ENCODE measurements at regions of chr12 and their contacts with region 1.

Region 1: GRCh38 chr12:13196130-13196921 is at the start of gene EMP1:
- DNase-seq: peak; percentile 87 to 96 (median 92)
- ATAC-seq: peak; percentile 83 to 92 (median 87)
- H3K4me3 ChIP-seq: peak within 1 kb of the TSS; percentile 54 to 85 (median 66)
- H3K27ac ChIP-seq: peak within 1 kb of the TSS; percentile 81 to 99 (median 90)
- H3K4me1 ChIP-seq: peaks cover 0 to 67% (median 32%) of the 10 kb centered on the region in 12 donors
- H3K27me3 ChIP-seq: no peaks in the 10 kb centered on the region
- CTCF ChIP-seq: no peak
- POLR2A ChIP-seq: peak in 1 of 2 donors; percentile 70
- total RNA-seq, gene EMP1: 67.9 to 281 (median 175) TPM

Region 2: GRCh38 chr12:13114251-13115052 is 81.9 kb before region 1 on chr12:
- intact Hi-C with region 1: loop called in 2 of 10 experiments (anchors 5 kb)
- DNase-seq: no peak
- ATAC-seq: peak in 3 of 4 donors; percentile 16 to 44 (median 32)
- H3K4me3 ChIP-seq: peak overlapping the region in 2 of 12 donors; percentile 14 to 17
- H3K27ac ChIP-seq: peak overlapping the region in 2 of 12 donors; percentile 9 to 13
- H3K4me1 ChIP-seq: peaks cover 0 to 37% (median 18%) of the 10 kb centered on the region in 12 donors
- H3K27me3 ChIP-seq: no peaks in the 10 kb centered on the region
- CTCF ChIP-seq: no peak
- POLR2A ChIP-seq: no peak

Region 3: GRCh38 chr12:13148064-13148847 is 48.1 kb before region 1 on chr12:
- intact Hi-C with region 1: loop called in 4 of 10 experiments (anchors 5 kb)
- DNase-seq: no peak
- ATAC-seq: peak in 2 of 4 donors; percentile 31 to 45
- H3K4me3 ChIP-seq: no peak overlapping the region
- H3K27ac ChIP-seq: peak overlapping the region in 8 of 12 donors; percentile 12 to 56 (median 36)
- H3K4me1 ChIP-seq: peaks cover 0 to 47% (median 13%) of the 10 kb centered on the region in 12 donors
- H3K27me3 ChIP-seq: no peaks in the 10 kb centered on the region
- CTCF ChIP-seq: no peak
- POLR2A ChIP-seq: no peak

Region 4: GRCh38 chr12:13154027-13154538 is 42.2 kb before region 1 on chr12:
- intact Hi-C with region 1: loop called in 4 of 10 experiments (anchors 5 kb)
- DNase-seq: no peak
- ATAC-seq: peak in 1 of 4 donors; percentile 66
- H3K4me3 ChIP-seq: no peak overlapping the region
- H3K27ac ChIP-seq: peak overlapping the region in 3 of 12 donors; percentile 3 to 63 (median 25)
- H3K4me1 ChIP-seq: peaks cover 0 to 47% (median 5%) of the 10 kb centered on the region in 12 donors
- H3K27me3 ChIP-seq: no peaks in the 10 kb centered on the region
- CTCF ChIP-seq: no peak
- POLR2A ChIP-seq: no peak

Region 5: GRCh38 chr12:13179211-13180074 is 16.9 kb before region 1 on chr12:
- intact Hi-C with region 1: loop called in 1 of 10 experiments (anchors 2 kb)
- DNase-seq: peak in 1 of 5 donors; percentile 59
- ATAC-seq: peak; percentile 71 to 84 (median 81)
- H3K4me3 ChIP-seq: peak overlapping the region in 3 of 12 donors; percentile 5 to 15 (median 7)
- H3K27ac ChIP-seq: peak overlapping the region in 11 of 12 donors; percentile 43 to 75 (median 56)
- H3K4me1 ChIP-seq: peaks cover 0 to 22% (median 15%) of the 10 kb centered on the region in 12 donors
- H3K27me3 ChIP-seq: no peaks in the 10 kb centered on the region
- CTCF ChIP-seq: no peak
- POLR2A ChIP-seq: no peak

Region 6: DNA sequence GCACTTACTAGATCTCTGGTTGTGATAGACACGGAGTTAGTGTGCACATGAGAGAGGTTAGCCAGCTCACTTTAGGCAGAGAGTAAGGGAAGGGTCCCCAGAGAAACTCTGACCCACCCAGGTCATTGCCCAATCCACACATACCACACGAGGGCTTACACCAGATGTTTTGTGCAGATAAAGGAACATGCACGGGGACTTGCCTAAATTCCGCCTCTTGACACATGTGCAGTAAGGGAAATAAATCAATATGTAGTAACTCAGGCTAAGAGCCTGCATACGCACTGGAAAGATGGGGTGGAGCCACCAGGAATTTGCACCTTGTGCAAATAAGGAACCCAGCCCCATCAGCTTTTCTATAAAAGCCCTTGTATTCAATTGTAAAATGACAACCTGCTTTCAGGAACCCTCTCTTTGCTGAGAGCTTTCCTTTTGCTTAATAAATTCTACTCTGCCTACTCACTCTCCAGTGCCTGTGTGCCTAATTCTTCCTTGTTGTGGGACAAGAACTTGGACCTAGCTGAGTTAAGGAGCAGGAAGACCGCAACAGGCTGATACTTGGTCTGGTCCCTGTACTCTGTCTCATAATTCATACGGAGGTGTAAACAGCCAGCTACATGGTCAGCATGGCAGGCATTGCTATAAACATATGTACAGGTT is 120.4 kb after region 1 on chr12:
- intact Hi-C with region 1: no loop called
- DNase-seq: no peak
- ATAC-seq: no peak
- H3K4me3 ChIP-seq: no peak overlapping the region
- H3K27ac ChIP-seq: no peak overlapping the region
- H3K4me1 ChIP-seq: no peaks in the 10 kb centered on the region
- H3K27me3 ChIP-seq: no peaks in the 10 kb centered on the region
- CTCF ChIP-seq: no peak
- POLR2A ChIP-seq: no peak

Region 7: DNA sequence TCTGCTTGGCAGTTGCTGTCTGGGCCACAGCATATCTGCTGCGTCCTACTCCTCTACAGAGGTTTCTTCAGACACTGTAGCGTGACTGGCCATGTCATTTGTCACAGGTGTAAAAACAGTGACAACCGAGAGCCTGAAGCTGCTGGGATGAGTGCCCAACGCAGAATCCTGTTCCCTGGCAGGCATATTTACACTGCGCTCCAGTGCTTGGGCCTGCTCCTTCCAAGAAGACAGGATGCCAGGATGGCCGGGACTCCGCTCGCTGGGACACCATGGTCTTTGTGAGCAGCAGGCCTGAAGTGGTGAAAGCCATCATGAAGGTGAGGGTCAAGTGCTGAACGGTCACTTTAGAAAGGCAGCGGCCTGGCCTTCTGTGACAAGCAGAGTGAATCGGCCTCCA is 171.6 kb after region 1 on chr12:
- intact Hi-C with region 1: no loop called
- DNase-seq: peak in 2 of 5 donors; percentile 28 to 33
- ATAC-seq: peak in 3 of 4 donors; percentile 25 to 38 (median 26)
- H3K4me3 ChIP-seq: no peak overlapping the region
- H3K27ac ChIP-seq: no peak overlapping the region
- H3K4me1 ChIP-seq: no peaks in the 10 kb centered on the region
- H3K27me3 ChIP-seq: peaks cover 0 to 4% (median 0%) of the 10 kb centered on the region in 9 donors
- CTCF ChIP-seq: no peak
- POLR2A ChIP-seq: no peak

Region 8: GRCh38 chr12:13661005-13661887 is 464.9 kb after region 1 on chr12:
- intact Hi-C with region 1: no loop called
- DNase-seq: peak in 4 of 5 donors; percentile 25 to 39 (median 33)
- ATAC-seq: peak in 3 of 4 donors; percentile 54 to 82 (median 81)
- H3K4me3 ChIP-seq: no peak overlapping the region
- H3K27ac ChIP-seq: no peak overlapping the region
- H3K4me1 ChIP-seq: peaks cover 0 to 3% (median 0%) of the 10 kb centered on the region in 12 donors
- H3K27me3 ChIP-seq: peaks cover 0 to 8% (median 0%) of the 10 kb centered on the region in 9 donors
- CTCF ChIP-seq: peak; percentile 73 to 91 (median 82)
- POLR2A ChIP-seq: no peak

Measured in heart left ventricle (tissue), 16 donors.